B cell (primary cell): ENCODE measurements at regions of chr4 and their contacts with region 1.

Region 1: GRCh38 chr4:89226665-89227574 is 80.7 kb downstream of the GPRIN3 start:
- DNase-seq: peak; percentile 73
- ATAC-seq: peak; percentile 69
- H3K4me3 ChIP-seq: no peak overlapping the region
- H3K4me3 Mint-ChIP-seq: no peak overlapping the region
- H3K27ac ChIP-seq: no peak overlapping the region
- H3K27ac Mint-ChIP-seq: no peak overlapping the region
- H3K4me1 ChIP-seq: peaks cover 0 to 4% of the 10 kb centered on the region in 2 donors
- H3K4me1 Mint-ChIP-seq: peaks cover 2% of the 10 kb centered on the region
- H3K27me3 ChIP-seq: no peaks in the 10 kb centered on the region
- H3K27me3 Mint-ChIP-seq: no peaks in the 10 kb centered on the region
- CTCF ChIP-seq: peak; percentile 83

Region 2: DNA sequence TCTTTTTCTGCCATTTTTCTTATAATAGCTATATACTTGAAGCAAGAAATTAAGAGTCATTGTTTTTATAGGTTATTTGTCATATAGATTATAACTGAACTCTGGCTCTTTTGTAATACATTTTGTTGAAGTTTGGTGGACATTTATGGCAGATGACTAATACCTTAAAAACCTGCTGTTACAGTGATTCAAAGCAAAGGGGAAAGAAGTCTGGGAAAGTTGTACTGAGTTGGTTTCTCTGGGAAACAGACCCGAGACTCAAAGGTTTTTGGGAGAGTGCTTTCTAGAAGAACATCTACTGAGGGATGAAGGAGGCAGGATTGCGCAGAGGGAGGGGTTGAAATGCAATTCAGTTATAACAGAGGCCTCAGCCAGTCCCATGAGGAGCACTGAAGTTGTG is 565.2 kb before region 1 on chr4:
- CTCF ChIA-PET with region 1: no interaction called
- POLR2A ChIA-PET with region 1: no interaction called
- intact Hi-C with region 1: no loop called
- DNase-seq: no peak
- ATAC-seq: no peak
- H3K4me3 ChIP-seq: no peak overlapping the region
- H3K4me3 Mint-ChIP-seq: no peak overlapping the region
- H3K27ac ChIP-seq: no peak overlapping the region
- H3K27ac Mint-ChIP-seq: no peak overlapping the region
- H3K4me1 ChIP-seq: no peaks in the 10 kb centered on the region
- H3K4me1 Mint-ChIP-seq: no peaks in the 10 kb centered on the region
- H3K27me3 ChIP-seq: no peaks in the 10 kb centered on the region
- H3K27me3 Mint-ChIP-seq: no peaks in the 10 kb centered on the region
- CTCF ChIP-seq: no peak

Region 3: GRCh38 chr4:89029591-89029990 is 197.3 kb before region 1 on chr4:
- CTCF ChIA-PET with region 1: no interaction called
- POLR2A ChIA-PET with region 1: no interaction called
- intact Hi-C with region 1: no loop called
- DNase-seq: no peak
- ATAC-seq: no peak
- H3K4me3 ChIP-seq: no peak overlapping the region
- H3K4me3 Mint-ChIP-seq: no peak overlapping the region
- H3K27ac ChIP-seq: no peak overlapping the region
- H3K27ac Mint-ChIP-seq: no peak overlapping the region
- H3K4me1 ChIP-seq: no peaks in the 10 kb centered on the region
- H3K4me1 Mint-ChIP-seq: no peaks in the 10 kb centered on the region
- H3K27me3 ChIP-seq: no peaks in the 10 kb centered on the region
- H3K27me3 Mint-ChIP-seq: peaks cover 3% of the 10 kb centered on the region
- CTCF ChIP-seq: no peak

Region 4: DNA sequence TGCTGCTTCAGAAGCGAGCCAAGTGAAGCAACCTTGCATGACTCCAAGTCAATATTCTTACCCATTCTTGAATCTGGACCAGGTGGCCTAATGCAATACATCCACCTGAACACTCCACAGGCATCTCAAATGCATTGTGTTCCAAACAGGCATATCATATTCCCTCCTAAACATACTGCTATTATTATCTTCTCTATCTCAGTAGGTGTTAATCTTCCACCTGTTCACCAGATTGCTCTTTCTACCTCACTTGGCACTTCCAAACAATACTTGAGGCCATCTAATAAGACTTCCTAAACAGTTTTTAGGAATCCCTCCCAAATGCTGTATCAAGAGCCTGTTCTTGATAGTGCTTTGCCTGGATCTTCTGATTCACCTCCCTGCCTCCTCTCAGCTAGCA is 10.1 kb before region 1 on chr4:
- CTCF ChIA-PET with region 1: interaction called, 14 read pairs
- POLR2A ChIA-PET with region 1: no interaction called
- intact Hi-C with region 1: no loop called
- DNase-seq: no peak
- ATAC-seq: no peak
- H3K4me3 ChIP-seq: no peak overlapping the region
- H3K4me3 Mint-ChIP-seq: no peak overlapping the region
- H3K27ac ChIP-seq: no peak overlapping the region
- H3K27ac Mint-ChIP-seq: no peak overlapping the region
- H3K4me1 ChIP-seq: peaks cover 3 to 6% of the 10 kb centered on the region in 2 donors
- H3K4me1 Mint-ChIP-seq: peaks cover 9% of the 10 kb centered on the region
- H3K27me3 ChIP-seq: no peaks in the 10 kb centered on the region
- H3K27me3 Mint-ChIP-seq: no peaks in the 10 kb centered on the region
- CTCF ChIP-seq: no peak

Region 5: DNA sequence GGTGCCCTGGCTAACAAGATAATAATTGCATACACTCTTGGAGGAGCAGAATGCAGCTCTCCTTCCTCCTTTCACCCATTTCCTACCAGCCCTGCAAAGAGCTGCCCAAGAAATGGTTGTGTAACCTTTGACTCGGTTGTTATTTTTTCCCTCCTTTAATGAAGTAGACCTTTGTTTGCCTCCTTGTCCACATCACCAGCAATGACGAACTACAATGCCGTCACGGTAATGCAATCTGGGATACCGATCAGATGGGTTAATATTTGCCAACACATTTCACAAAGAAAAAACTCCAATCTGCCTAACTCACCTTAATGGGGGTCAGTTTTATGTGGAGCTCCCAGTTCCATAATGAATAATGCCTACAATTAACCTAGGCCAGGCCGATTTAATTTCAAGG is 48.7 kb after region 1 on chr4:
- CTCF ChIA-PET with region 1: no interaction called
- POLR2A ChIA-PET with region 1: no interaction called
- intact Hi-C with region 1: no loop called
- DNase-seq: no peak
- ATAC-seq: no peak
- H3K4me3 ChIP-seq: no peak overlapping the region
- H3K4me3 Mint-ChIP-seq: no peak overlapping the region
- H3K27ac ChIP-seq: no peak overlapping the region
- H3K27ac Mint-ChIP-seq: no peak overlapping the region
- H3K4me1 ChIP-seq: no peaks in the 10 kb centered on the region
- H3K4me1 Mint-ChIP-seq: peaks cover 9% of the 10 kb centered on the region
- H3K27me3 ChIP-seq: peaks cover 0 to 4% (median 0%) of the 10 kb centered on the region in 4 experiments
- H3K27me3 Mint-ChIP-seq: no peaks in the 10 kb centered on the region
- CTCF ChIP-seq: no peak

Region 6: DNA sequence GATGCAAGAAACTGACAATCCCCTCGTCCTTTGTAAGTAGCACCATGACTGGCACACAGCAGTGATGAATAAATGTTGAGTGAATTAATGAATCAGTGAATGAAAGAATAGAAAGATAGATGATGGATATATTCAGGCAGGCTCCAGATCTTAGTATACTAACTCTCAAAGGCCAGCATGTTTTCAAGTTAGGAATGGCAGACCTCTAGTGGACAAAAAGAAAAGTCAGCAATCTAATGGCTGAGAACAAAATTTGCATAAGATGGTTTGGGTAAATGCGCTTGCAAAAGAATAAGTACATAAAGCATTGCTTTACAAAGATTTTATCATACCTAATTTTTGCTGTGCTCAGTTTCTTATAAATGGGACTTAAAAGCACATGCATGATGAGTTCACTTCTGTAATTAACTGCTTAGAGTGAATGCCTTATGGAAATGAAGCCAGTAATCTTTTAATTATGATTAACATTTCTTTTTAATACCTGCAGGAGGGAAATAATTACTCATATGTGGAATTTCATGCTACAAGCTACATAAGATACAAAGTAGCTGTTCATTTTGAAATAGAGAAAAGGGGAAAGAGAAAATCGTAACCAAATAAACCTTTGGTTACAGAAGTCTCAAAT is 207.6 kb after region 1 on chr4:
- CTCF ChIA-PET with region 1: interaction called, 92 read pairs
- POLR2A ChIA-PET with region 1: no interaction called
- intact Hi-C with region 1: loop called (anchors 1 kb)
- DNase-seq: peak; percentile 52
- ATAC-seq: peak; percentile 41
- H3K4me3 ChIP-seq: no peak overlapping the region
- H3K4me3 Mint-ChIP-seq: no peak overlapping the region
- H3K27ac ChIP-seq: no peak overlapping the region
- H3K27ac Mint-ChIP-seq: no peak overlapping the region
- H3K4me1 ChIP-seq: peaks cover 0 to 4% of the 10 kb centered on the region in 2 donors
- H3K4me1 Mint-ChIP-seq: peaks cover 7% of the 10 kb centered on the region
- H3K27me3 ChIP-seq: no peaks in the 10 kb centered on the region
- H3K27me3 Mint-ChIP-seq: peaks cover 9% of the 10 kb centered on the region
- CTCF ChIP-seq: peak; percentile 71

Region 7: GRCh38 chr4:89708903-89709421 is 482.0 kb after region 1 on chr4:
- CTCF ChIA-PET with region 1: no interaction called
- POLR2A ChIA-PET with region 1: no interaction called
- intact Hi-C with region 1: no loop called
- DNase-seq: no peak
- ATAC-seq: no peak
- H3K4me3 ChIP-seq: no peak overlapping the region
- H3K4me3 Mint-ChIP-seq: no peak overlapping the region
- H3K27ac ChIP-seq: no peak overlapping the region
- H3K27ac Mint-ChIP-seq: no peak overlapping the region
- H3K4me1 ChIP-seq: no peaks in the 10 kb centered on the region
- H3K4me1 Mint-ChIP-seq: no peaks in the 10 kb centered on the region
- H3K27me3 ChIP-seq: no peaks in the 10 kb centered on the region
- H3K27me3 Mint-ChIP-seq: peaks cover 3% of the 10 kb centered on the region
- CTCF ChIP-seq: no peak

Region 8: DNA sequence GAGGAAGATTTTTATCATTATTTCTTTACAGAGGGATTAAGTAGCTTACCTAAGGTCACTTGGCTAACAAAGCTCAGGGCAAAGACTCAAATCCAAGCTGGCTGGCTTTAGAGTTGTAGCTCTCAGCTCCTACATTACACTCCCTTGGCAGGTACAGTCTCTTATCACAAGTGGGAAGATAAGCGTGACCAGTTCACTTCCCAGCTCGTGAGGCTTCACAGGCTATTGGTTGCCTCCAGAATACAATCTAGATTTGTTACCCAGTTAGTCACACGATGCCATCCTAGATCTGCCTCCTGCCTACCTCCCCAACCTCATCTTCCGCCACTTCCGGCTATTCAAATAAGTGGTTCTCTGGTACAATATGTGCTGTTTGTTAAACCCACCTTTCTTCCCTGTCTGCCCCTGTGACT is 671.4 kb after region 1 on chr4:
- CTCF ChIA-PET with region 1: interaction called, 11 read pairs
- POLR2A ChIA-PET with region 1: no interaction called
- intact Hi-C with region 1: loop called (anchors 1 kb)
- DNase-seq: peak; percentile 5
- ATAC-seq: peak; percentile 43
- H3K4me3 ChIP-seq: no peak overlapping the region
- H3K4me3 Mint-ChIP-seq: no peak overlapping the region
- H3K27ac ChIP-seq: no peak overlapping the region
- H3K27ac Mint-ChIP-seq: no peak overlapping the region
- H3K4me1 ChIP-seq: peaks cover 13 to 32% of the 10 kb centered on the region in 2 donors
- H3K4me1 Mint-ChIP-seq: peaks cover 16% of the 10 kb centered on the region
- H3K27me3 ChIP-seq: peaks cover 0 to 20% (median 6%) of the 10 kb centered on the region in 4 experiments
- H3K27me3 Mint-ChIP-seq: peaks cover 8% of the 10 kb centered on the region
- CTCF ChIP-seq: no peak